Vagina (tissue), 2 donors: ENCODE measurements at regions of chr12 and their contacts with region 1.

Region 1: DNA sequence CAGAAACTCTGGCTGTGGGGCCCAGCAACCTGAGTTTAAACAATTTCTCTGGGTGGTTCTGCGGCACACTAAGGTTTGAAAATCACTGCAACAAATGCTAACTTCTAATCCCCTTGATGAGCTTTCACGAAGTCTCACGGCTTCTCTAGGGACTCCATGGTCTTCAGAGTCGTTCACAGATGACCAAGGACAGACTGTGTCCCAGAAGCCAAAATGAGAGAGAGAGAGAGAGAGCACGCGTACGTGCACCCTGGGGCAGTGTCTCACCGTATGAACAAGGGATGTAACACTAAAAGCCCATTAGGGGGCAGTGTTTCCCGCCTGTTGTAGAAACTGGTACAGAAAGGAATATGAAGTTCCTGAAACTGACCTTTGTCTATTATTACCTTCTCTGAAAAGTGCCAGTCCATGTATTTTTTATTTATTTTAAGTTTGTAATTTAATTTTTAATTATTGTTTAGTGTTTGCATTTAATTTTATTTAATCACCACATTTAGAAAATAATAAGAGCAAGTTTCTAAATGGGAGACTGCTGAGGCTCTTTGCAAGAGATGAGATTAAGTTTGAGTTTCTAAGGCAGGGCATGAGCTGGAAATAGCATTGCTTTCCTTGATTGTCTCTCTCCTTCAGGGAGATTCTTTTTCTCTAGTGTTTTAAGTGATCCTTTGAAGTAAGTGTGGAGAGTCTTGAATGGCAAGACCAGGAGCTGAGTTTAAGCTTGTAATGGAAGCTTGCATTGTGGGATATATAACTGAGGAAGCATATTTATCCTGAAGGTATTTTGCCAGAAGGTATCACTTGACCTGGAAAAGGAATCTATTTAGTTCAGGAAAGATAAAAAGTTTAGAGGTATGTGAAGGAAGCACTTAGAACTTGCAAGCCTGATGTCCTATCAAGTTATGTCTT is 3.5 kb downstream of the APOLD1 start:
- DNase-seq: no peak
- H3K4me3 ChIP-seq: peak overlapping the region in 1 of 2 donors; percentile 68
- H3K27ac ChIP-seq: peak overlapping the region; percentile 97
- H3K4me1 ChIP-seq: peaks cover 32% of the 10 kb centered on the region
- H3K27me3 ChIP-seq: no peaks in the 10 kb centered on the region
- CTCF ChIP-seq: peak in 2 of 3 experiments; percentile 70 to 84
- POLR2A ChIP-seq: no peak

Region 2: GRCh38 chr12:12716793-12717585 is 71.9 kb before region 1 on chr12 and contains the start of gene CDKN1B:
- intact Hi-C with region 1: loop called (anchors 2 kb)
- DNase-seq: peak in 1 of 2 donors; percentile 96
- H3K4me3 ChIP-seq: peak within 1 kb of the TSS; percentile 93 to 100
- H3K27ac ChIP-seq: peak within 1 kb of the TSS; percentile 100
- H3K4me1 ChIP-seq: peaks cover 61% of the 10 kb centered on the region
- H3K27me3 ChIP-seq: no peaks in the 10 kb centered on the region
- CTCF ChIP-seq: no peak
- POLR2A ChIP-seq: peak in 1 of 2 donors; percentile 84
- total RNA-seq, gene CDKN1B: 52.5 TPM

Region 3: DNA sequence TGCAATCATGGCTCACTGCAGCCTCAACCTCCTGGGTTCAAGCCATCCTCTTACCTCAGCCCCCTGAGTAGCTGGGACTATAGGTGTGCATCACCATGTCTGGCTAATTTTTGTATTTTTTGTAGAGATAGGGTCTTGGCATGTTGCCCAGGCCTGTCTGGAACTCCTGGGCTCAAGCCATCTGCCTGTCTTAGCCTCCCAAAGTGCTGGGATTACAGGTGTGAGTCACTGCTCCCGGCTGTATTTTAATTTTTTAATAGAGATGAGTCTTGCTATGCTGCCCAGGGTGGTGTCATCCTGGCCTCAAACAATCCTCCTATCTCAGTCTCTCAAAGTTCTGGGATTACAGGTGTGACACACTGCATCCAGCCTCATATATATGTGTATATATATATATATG is 70.8 kb after region 1 on chr12:
- intact Hi-C with region 1: no loop called
- DNase-seq: no peak
- H3K4me3 ChIP-seq: no peak overlapping the region
- H3K27ac ChIP-seq: no peak overlapping the region
- H3K4me1 ChIP-seq: no peaks in the 10 kb centered on the region
- H3K27me3 ChIP-seq: no peaks in the 10 kb centered on the region
- CTCF ChIP-seq: no peak
- POLR2A ChIP-seq: no peak